ENCODE measurements at regions of chr1 and their contacts with region 1.

Region 1: GRCh38 chr1:197915862-197916499 is 1.2 kb upstream of the LHX9 start:
- DNase-seq: peak in 1 of 3 donors; percentile 23
- H3K4me3 ChIP-seq: peak overlapping the region in 1 of 3 experiments; percentile 38
- H3K4me3 Mint-ChIP-seq: peak overlapping the region; percentile 49 to 97
- H3K27ac ChIP-seq: no peak overlapping the region
- H3K27ac Mint-ChIP-seq: peak overlapping the region in 1 of 7 donors; percentile 50
- H3K4me1 ChIP-seq: peaks cover 78 to 80% of the 10 kb centered on the region in 2 donors
- H3K4me1 Mint-ChIP-seq: peaks cover 89% of the 10 kb centered on the region
- H3K27me3 ChIP-seq: peaks cover 97 to 100% of the 10 kb centered on the region in 2 donors
- H3K27me3 Mint-ChIP-seq: peaks cover 99 to 100% (median 100%) of the 10 kb centered on the region in 3 donors
- CTCF ChIP-seq: peak; percentile 23

Region 2: GRCh38 chr1:197614916-197615692 is 300.9 kb before region 1 on chr1:
- intact Hi-C with region 1: loop called in 1 of 2 experiments (anchors 10 kb)
- DNase-seq: peak in 2 of 3 donors; percentile 3 to 14
- H3K4me3 ChIP-seq: no peak overlapping the region
- H3K4me3 Mint-ChIP-seq: no peak overlapping the region
- H3K27ac ChIP-seq: no peak overlapping the region
- H3K27ac Mint-ChIP-seq: no peak overlapping the region
- H3K4me1 ChIP-seq: no peaks in the 10 kb centered on the region
- H3K4me1 Mint-ChIP-seq: no peaks in the 10 kb centered on the region
- H3K27me3 ChIP-seq: no peaks in the 10 kb centered on the region
- H3K27me3 Mint-ChIP-seq: no peaks in the 10 kb centered on the region
- CTCF ChIP-seq: peak; percentile 41

Region 3: DNA sequence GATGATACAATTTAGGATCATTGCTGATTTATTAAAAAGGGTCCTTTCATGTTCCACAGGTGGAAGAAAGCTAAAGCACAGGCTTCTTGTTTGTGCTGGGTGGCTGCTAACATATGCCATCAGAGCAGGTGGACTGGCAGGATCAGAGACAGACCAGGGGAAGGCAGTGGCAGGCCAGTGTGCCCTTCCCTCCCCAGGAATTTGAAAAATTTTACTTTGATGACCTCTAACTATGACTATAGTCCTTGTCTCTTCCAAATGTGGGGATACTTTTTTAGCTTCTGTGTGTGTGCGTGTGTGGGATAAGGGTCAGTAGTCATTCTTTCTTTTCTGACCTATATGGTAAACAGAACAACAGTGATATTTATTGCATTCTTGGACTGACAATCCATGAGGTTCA is 51.1 kb after region 1 on chr1:
- intact Hi-C with region 1: no loop called
- DNase-seq: no peak
- H3K4me3 ChIP-seq: no peak overlapping the region
- H3K4me3 Mint-ChIP-seq: no peak overlapping the region
- H3K27ac ChIP-seq: no peak overlapping the region
- H3K27ac Mint-ChIP-seq: peak overlapping the region in 1 of 7 donors; percentile 4
- H3K4me1 ChIP-seq: no peaks in the 10 kb centered on the region
- H3K4me1 Mint-ChIP-seq: no peaks in the 10 kb centered on the region
- H3K27me3 ChIP-seq: no peaks in the 10 kb centered on the region
- H3K27me3 Mint-ChIP-seq: peaks cover 0 to 2% (median 2%) of the 10 kb centered on the region in 3 donors
- CTCF ChIP-seq: no peak

Region 4: DNA sequence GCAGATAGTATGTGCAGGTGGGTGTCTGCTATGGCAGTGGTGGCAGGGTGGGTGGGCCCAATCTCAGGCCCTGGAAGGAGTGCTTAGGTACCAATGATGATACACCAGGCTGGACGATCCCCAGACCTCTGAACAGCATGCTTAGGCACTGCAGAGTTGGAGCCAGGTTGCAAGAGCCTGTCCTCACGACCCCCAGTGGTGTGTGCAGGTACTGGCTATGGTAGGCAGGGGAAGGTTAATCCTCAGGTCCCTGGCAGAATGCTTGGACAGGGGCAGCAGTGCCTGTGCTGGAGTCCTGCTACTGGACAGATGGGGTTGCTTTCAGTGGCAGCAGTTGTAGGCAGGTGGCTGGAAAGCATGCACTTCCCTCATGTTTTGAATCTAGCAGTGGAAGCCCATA is 140.3 kb after region 1 on chr1:
- intact Hi-C with region 1: no loop called
- DNase-seq: no peak
- H3K4me3 ChIP-seq: no peak overlapping the region
- H3K4me3 Mint-ChIP-seq: no peak overlapping the region
- H3K27ac ChIP-seq: no peak overlapping the region
- H3K27ac Mint-ChIP-seq: no peak overlapping the region
- H3K4me1 ChIP-seq: peaks cover 15% of the 10 kb centered on the region in 2 donors
- H3K4me1 Mint-ChIP-seq: peaks cover 20% of the 10 kb centered on the region
- H3K27me3 ChIP-seq: no peaks in the 10 kb centered on the region
- H3K27me3 Mint-ChIP-seq: peaks cover 0 to 8% (median 3%) of the 10 kb centered on the region in 3 donors
- CTCF ChIP-seq: no peak

Measured in CD14-positive monocyte (primary cell).